K562 (cell line): ENCODE measurements at regions of chr13 and their contacts with region 1.

Region 1: GRCh38 chr13:96958286-96958891 is 35.9 kb downstream of the OXGR1 start:
- DNase-seq: peak in 3 of 4 experiments; percentile 9 to 16 (median 10)
- ATAC-seq: peak; percentile 57; the same call in 1 of the 3 replicates
- H3K4me3 ChIP-seq: no peak overlapping the region
- H3K27ac ChIP-seq: no peak overlapping the region
- H3K4me1 ChIP-seq: no peaks in the 10 kb centered on the region
- H3K27me3 ChIP-seq: no peaks in the 10 kb centered on the region
- CTCF ChIP-seq: peak; percentile 23 to 61 (median 42); a peak in 4 of 6 replicates
- EP300 ChIP-seq: no peak
- POLR2A ChIP-seq: no peak
- RAD21 ChIP-seq: peak; percentile 24 to 55

Region 2: DNA sequence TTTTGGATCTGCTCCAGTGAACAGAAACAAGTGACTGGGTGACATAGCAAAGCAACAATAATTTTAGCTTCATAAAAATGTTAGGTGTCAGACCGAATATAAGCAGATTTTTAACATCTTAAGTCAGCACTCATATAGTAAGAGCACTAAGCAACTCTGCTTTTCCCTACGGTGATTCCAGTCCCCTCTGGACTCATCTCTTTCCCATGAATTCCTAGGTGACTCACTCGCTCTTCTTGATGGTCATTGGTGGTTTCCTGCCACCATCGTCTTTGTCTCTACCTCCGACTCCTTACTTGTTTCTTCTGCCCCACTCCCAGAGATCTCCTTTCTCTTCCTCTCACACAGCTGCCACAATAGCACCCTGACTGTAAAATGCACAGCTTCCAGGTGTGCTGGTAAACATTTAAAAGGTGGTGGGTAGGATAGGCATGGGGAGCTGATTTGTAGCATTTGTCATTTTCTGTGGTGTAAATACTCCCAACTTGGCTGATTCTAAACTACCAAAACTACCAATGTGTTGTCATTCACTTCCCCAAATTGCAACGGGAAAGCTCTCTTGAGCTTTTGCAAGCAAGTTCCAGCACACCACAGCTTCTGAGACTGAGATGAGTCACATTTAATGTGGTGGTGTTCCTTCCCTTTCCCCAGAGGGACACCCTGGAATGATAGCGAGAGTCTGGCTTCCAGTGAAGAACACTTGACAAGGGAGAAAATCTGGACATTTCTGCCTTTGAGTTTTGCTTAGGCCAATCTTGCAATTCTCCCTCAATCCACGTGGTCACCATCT is 1448.7 kb before region 1 on chr13:
- CTCF ChIA-PET with region 1: no interaction called
- POLR2A ChIA-PET with region 1: no interaction called
- in situ Hi-C with region 1: loop called (anchors 25 kb)
- intact Hi-C with region 1: no loop called
- DNase-seq: no peak
- ATAC-seq: no peak
- H3K4me3 ChIP-seq: no peak overlapping the region
- H3K27ac ChIP-seq: no peak overlapping the region
- H3K4me1 ChIP-seq: no peaks in the 10 kb centered on the region
- H3K27me3 ChIP-seq: peaks cover 0 to 8% of the 10 kb centered on the region in 2 experiments; a peak in 2 of 5 replicates
- CTCF ChIP-seq: no peak
- EP300 ChIP-seq: no peak
- POLR2A ChIP-seq: no peak
- RAD21 ChIP-seq: no peak